PC-3 (cell line): ENCODE measurements at regions of chr2 and their contacts with region 1.

Region 1: DNA sequence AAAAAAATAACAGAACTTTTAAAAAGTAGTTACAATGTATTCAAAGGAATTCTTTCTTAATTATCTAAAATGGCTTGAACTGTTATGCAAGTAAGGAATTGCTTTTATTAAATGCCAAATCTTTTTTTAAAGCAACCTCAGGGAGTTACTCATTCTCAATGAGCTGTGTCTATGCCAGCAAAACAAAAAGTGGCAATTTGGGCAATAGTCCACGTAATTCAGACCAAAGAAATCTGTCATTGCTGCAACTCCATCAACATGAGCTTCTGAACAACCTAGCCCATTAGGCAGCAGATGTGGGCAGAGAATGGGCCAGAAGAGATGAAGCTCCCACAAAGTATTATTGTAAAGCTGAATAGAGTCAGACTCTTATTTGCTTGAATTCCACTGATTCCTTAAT is 118.4 kb downstream of the ALK start:
- DNase-seq: peak; percentile 8
- ATAC-seq: no peak
- H3K4me3 ChIP-seq: no peak overlapping the region
- H3K27ac ChIP-seq: no peak overlapping the region
- H3K4me1 ChIP-seq: peaks cover 20% of the 10 kb centered on the region
- H3K27me3 ChIP-seq: no peaks in the 10 kb centered on the region
- CTCF ChIP-seq: no peak

Region 2: DNA sequence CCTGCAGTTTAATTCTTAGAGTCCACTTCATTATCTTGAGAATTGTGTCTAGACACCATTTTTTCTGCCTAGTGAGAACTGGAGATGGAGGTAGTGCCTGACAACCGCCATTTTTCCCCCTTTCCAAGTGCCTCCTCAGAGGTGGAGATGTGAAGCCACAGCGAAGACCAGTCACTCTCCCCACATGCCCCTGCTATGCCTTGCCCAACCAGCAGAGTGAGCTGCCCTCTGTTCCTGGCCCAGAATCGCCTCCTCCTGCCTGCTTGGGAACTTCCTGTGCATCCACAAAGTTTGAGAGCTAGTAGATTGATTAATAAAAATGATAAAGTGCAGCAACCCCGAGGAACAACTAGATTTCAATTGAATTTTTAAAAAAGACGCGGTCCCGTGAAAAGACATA is 564.5 kb before region 1 on chr2:
- CTCF ChIA-PET with region 1: no interaction called
- POLR2A ChIA-PET with region 1: interaction called, 13 read pairs
- intact Hi-C with region 1: no loop called
- DNase-seq: peak; percentile 71
- ATAC-seq: peak; percentile 77
- H3K4me3 ChIP-seq: no peak overlapping the region
- H3K27ac ChIP-seq: no peak overlapping the region
- H3K4me1 ChIP-seq: peaks cover 7% of the 10 kb centered on the region
- H3K27me3 ChIP-seq: no peaks in the 10 kb centered on the region
- CTCF ChIP-seq: peak; percentile 88

Region 3: GRCh38 chr2:30078521-30078920 is 275.5 kb after region 1 on chr2:
- CTCF ChIA-PET with region 1: no interaction called
- POLR2A ChIA-PET with region 1: no interaction called
- intact Hi-C with region 1: loop called (anchors 5 kb)
- DNase-seq: no peak
- ATAC-seq: no peak
- H3K4me3 ChIP-seq: no peak overlapping the region
- H3K27ac ChIP-seq: no peak overlapping the region
- H3K4me1 ChIP-seq: no peaks in the 10 kb centered on the region
- H3K27me3 ChIP-seq: 0 out of 2 replicates have a peak, but pooled peaks cover 7% of the 10 kb centered on the region
- CTCF ChIP-seq: no peak; the same call in 1 of the 2 replicates